SK-N-SH (cell line): ENCODE measurements at regions of chr20 and their contacts with region 1.

Region 1: DNA sequence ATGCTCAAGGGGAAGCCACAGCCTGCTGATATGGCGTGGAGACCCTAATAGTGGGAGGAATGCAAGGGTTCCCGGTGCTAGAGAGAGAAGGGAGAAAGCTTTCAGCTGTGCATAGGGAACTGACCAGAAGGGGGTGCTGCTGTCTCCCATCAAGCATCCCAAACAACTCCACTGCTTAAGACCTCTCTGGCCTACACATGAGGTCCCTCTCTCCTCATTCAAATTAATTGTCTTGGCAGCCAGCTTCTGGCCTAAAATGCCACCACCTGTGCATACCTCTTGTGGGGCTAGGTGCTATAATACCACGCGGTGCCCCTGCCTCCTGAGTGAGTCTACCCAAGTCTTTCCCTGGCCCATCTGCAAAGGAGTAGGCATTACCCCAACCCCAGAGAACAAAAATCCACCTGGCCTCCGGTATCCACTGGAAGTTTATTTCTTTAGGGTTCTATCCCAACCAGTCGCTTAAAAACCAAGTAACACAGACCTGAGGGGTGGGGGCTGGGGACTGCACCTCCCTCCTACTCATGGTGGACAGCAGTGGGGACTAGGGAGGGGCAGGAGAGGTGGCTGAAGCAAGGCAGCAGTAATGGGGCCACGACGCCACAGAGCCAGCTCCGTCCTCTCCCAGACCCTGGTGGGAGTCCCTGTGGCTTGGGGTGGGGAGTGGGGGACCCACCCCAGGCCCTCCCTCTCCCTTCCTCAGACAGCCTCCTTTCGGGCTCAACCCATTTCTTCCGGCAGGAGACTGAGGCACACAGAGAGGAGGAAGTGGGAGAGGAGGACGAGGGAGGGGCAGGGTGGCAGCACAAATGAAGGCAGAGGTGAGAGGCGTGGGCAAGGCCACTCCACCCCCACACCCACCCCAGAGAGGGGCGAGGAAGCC is 14.2 kb downstream of the ADISSP start:
- DNase-seq: peak; percentile 82
- H3K4me3 ChIP-seq: no peak overlapping the region
- H3K27ac ChIP-seq: no peak overlapping the region
- H3K4me1 ChIP-seq: peaks cover 0 to 6% of the 10 kb centered on the region in 2 experiments; a peak in 1 of 4 replicates
- H3K27me3 ChIP-seq: no peaks in the 10 kb centered on the region
- CTCF ChIP-seq: peak; percentile 77
- EP300 ChIP-seq: no peak
- RAD21 ChIP-seq: peak; percentile 72

Region 2: GRCh38 chr20:3739054-3739925 is 14.0 kb before region 1 on chr20:
- CTCF ChIA-PET with region 1: interaction called, 25 read pairs
- POLR2A ChIA-PET with region 1: interaction called, 4 read pairs
- DNase-seq: no peak
- H3K4me3 ChIP-seq: no peak overlapping the region
- H3K27ac ChIP-seq: no peak overlapping the region; a peak in 1 of 4 replicates
- H3K4me1 ChIP-seq: peaks cover 0 to 22% of the 10 kb centered on the region in 2 experiments; a peak in 1 of 4 replicates
- H3K27me3 ChIP-seq: no peaks in the 10 kb centered on the region
- CTCF ChIP-seq: no peak
- EP300 ChIP-seq: no peak
- RAD21 ChIP-seq: no peak

Region 3: DNA sequence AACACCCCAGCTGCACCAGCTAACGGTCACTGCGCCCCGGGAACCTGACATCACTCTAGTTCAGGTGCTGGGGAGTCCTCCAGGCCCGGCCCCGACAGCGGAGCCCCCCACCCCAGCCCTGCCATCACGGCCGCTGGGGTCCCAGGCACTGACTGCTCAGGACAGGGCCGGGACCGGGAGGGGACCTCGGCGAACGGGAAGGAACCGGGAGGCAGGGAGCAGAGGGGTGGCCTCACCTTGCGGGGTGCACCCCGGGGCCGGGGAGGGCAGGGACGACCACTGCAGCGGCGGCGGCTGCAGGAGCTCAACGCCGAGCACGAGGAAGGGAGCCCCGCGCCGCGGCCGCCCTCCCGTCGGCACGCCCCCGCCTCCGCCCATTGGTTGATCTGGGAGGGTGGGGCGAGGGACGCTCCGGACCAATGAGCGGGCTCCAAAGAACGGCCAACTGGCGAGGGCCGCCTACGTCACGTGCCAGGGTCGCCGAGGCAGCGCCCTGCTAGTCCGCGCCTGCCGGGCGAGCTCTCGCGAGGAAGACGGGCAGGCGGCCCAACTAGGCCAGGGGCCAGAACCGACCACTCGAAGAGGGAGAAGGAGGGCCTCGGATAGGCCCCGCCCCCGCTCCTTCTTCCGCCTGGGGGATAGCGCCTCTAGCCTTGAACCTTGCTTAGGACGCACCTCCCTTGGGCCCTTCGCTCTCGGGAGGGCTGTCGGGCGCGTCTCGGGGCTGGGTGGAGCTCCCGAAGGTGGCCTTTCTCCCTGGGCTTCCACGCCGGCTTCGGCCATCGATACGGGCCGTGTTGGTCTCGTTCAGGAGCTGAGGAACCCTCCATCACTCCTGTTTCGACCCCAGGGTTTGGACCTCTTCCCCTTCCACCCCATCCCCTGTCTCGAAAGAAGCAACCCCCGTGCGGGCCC is 14.3 kb after region 1 on chr20 and contains the start of gene ADISSP:
- CTCF ChIA-PET with region 1: interaction called, 151 read pairs
- POLR2A ChIA-PET with region 1: interaction called, 13 read pairs
- DNase-seq: peak; percentile 99
- H3K4me3 ChIP-seq: peak within 1 kb of the TSS; percentile 83 to 93
- H3K27ac ChIP-seq: peak within 1 kb of the TSS; percentile 94 to 95
- H3K4me1 ChIP-seq: peaks cover 9 to 22% of the 10 kb centered on the region in 2 experiments; a peak in 3 of 4 replicates
- H3K27me3 ChIP-seq: no peaks in the 10 kb centered on the region
- CTCF ChIP-seq: peak; percentile 28
- EP300 ChIP-seq: no peak
- RAD21 ChIP-seq: no peak
- polyA plus RNA-seq, gene ADISSP: 59.9 and 73.9 TPM in 2 replicates